ENCODE measurements at regions of chr4 and their contacts with region 1.

Region 1: DNA sequence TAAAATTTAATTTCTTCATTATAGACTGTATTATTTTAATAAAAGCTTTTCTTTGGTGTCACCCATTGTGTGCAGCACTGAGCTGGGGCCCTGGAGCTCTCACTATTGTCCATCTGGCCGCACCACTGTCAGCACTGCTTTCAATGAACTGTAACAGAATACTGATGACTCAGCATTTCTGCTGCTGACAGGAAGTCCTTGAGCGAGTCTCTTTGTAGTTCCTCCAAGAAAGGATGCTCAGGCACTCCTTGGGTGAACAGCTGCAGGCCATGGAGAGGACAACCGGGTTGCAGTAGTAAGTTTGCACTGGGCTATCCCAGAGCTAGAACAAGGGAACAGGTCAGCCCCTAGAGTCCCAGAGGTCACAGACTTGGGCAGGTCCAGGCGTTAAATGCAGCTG is 81.6 kb downstream of the SORBS2 start:
- DNase-seq: no peak
- ATAC-seq: peak; percentile 43
- H3K4me3 ChIP-seq: no peak overlapping the region
- H3K27ac ChIP-seq: peak overlapping the region in 1 of 2 donors; percentile 96
- H3K4me1 ChIP-seq: peaks cover 3 to 9% of the 10 kb centered on the region in 2 donors
- H3K27me3 ChIP-seq: no peaks in the 10 kb centered on the region

Region 2: GRCh38 chr4:185656467-185656931 is 73.9 kb before region 1 on chr4:
- intact Hi-C with region 1: loop called (anchors 5 to 10 kb)
- DNase-seq: peak; percentile 80 to 87
- ATAC-seq: peak; percentile 88
- H3K4me3 ChIP-seq: peak overlapping the region; percentile 68 to 75
- H3K27ac ChIP-seq: peak overlapping the region in 1 of 2 donors; percentile 77
- H3K4me1 ChIP-seq: peaks cover 3 to 4% of the 10 kb centered on the region in 2 donors
- H3K27me3 ChIP-seq: no peaks in the 10 kb centered on the region

Region 3: DNA sequence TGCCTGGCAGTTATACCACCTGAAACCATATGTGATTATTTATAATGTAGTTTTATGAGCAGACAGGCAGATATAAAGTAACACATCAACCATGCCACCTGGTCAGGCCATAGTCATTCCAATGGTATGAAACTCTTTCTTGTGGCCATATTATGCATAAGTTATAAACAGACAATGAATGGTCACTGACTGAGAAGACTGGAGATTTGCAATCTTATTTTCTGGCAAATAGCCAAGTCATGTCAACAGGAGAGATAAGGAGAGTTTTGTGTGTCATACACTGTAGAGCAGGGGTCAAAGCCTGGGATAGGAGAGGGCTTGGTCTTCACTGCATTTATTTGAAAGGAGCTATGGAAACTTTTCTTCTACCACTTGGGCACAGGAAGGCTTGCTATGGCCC is 52.1 kb after region 1 on chr4:
- intact Hi-C with region 1: no loop called
- DNase-seq: no peak
- ATAC-seq: no peak
- H3K4me3 ChIP-seq: no peak overlapping the region
- H3K27ac ChIP-seq: no peak overlapping the region
- H3K4me1 ChIP-seq: no peaks in the 10 kb centered on the region
- H3K27me3 ChIP-seq: no peaks in the 10 kb centered on the region

Region 4: GRCh38 chr4:186021461-186022167 is 291.2 kb after region 1 on chr4:
- intact Hi-C with region 1: loop called (anchors 5 to 10 kb)
- DNase-seq: no peak
- ATAC-seq: peak; percentile 75
- H3K4me3 ChIP-seq: peak overlapping the region in 1 of 2 donors; percentile 35
- H3K27ac ChIP-seq: no peak overlapping the region
- H3K4me1 ChIP-seq: peaks cover 0 to 3% of the 10 kb centered on the region in 2 donors
- H3K27me3 ChIP-seq: no peaks in the 10 kb centered on the region

Region 5: GRCh38 chr4:186058253-186058979 is 328.0 kb after region 1 on chr4:
- intact Hi-C with region 1: no loop called
- DNase-seq: no peak
- ATAC-seq: no peak
- H3K4me3 ChIP-seq: no peak overlapping the region
- H3K27ac ChIP-seq: no peak overlapping the region
- H3K4me1 ChIP-seq: no peaks in the 10 kb centered on the region
- H3K27me3 ChIP-seq: no peaks in the 10 kb centered on the region

Measured in aorta (tissue), 5 donors.